ENCODE measurements at regions of chr15 and their contacts with region 1.

Region 1: DNA sequence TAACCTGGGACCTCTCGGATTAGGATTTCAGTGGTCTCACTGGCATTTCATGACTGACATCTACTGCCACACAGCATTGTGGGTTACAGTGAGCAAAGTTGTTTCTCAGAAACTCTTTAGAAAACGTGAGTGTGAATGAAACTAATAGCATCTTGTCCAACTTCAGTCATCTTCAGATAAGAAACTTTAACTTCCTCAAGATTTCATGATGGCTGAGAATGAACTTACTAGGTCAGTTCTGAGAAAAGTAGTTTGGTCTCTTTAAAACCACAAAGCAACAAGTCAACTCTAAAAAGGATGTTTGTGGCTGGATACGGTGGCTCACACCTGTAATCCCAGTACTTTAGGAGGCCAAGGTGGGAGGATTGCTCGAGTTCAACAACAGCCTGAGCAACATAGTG is 14.2 kb upstream of the HOMER2 start:
- DNase-seq: no peak
- ATAC-seq: no peak
- H3K4me3 ChIP-seq: no peak overlapping the region
- H3K27ac ChIP-seq: no peak overlapping the region
- H3K4me1 ChIP-seq: peaks cover 0 to 24% (median 7%) of the 10 kb centered on the region in 12 donors
- H3K27me3 ChIP-seq: no peaks in the 10 kb centered on the region
- CTCF ChIP-seq: no peak
- POLR2A ChIP-seq: no peak

Region 2: GRCh38 chr15:82737975-82738374 is 228.7 kb before region 1 on chr15:
- intact Hi-C with region 1: no loop called
- DNase-seq: no peak
- ATAC-seq: no peak
- H3K4me3 ChIP-seq: no peak overlapping the region
- H3K27ac ChIP-seq: no peak overlapping the region
- H3K4me1 ChIP-seq: no peaks in the 10 kb centered on the region
- H3K27me3 ChIP-seq: no peaks in the 10 kb centered on the region
- CTCF ChIP-seq: no peak
- POLR2A ChIP-seq: no peak

Region 3: DNA sequence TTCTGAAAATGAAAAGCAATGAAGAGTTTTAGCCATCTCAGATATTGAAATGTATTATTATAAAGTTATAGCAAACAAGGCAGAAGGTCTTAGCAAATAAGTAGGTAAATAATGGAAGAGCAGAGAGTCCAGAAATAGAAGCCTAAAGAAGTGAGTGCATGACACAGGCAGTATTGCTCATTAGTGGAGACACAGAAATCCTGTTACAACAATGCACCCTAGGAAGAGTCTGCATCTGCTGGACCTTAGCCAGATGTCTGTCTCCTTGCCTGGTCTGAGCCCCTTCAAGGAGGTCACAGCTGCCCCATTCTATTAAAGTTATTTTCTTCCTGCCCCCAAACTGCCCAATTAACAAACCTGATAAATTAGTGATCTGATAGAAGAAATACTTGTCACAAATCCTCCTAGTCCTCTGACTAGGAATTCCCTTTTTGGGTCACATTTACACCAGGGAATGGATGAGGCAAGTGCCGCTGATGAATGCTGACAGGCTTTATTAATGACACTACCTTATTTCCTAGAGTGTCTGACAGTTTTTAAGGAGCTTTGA is 66.1 kb before region 1 on chr15:
- intact Hi-C with region 1: loop called in 1 of 10 experiments (anchors 10 kb)
- DNase-seq: no peak
- ATAC-seq: no peak
- H3K4me3 ChIP-seq: no peak overlapping the region
- H3K27ac ChIP-seq: no peak overlapping the region
- H3K4me1 ChIP-seq: peaks cover 0 to 15% (median 1%) of the 10 kb centered on the region in 12 donors
- H3K27me3 ChIP-seq: no peaks in the 10 kb centered on the region
- CTCF ChIP-seq: no peak
- POLR2A ChIP-seq: no peak

Measured in heart left ventricle (tissue), 16 donors.